ENCODE measurements at regions of chr10 and their contacts with region 1.

Region 1: DNA sequence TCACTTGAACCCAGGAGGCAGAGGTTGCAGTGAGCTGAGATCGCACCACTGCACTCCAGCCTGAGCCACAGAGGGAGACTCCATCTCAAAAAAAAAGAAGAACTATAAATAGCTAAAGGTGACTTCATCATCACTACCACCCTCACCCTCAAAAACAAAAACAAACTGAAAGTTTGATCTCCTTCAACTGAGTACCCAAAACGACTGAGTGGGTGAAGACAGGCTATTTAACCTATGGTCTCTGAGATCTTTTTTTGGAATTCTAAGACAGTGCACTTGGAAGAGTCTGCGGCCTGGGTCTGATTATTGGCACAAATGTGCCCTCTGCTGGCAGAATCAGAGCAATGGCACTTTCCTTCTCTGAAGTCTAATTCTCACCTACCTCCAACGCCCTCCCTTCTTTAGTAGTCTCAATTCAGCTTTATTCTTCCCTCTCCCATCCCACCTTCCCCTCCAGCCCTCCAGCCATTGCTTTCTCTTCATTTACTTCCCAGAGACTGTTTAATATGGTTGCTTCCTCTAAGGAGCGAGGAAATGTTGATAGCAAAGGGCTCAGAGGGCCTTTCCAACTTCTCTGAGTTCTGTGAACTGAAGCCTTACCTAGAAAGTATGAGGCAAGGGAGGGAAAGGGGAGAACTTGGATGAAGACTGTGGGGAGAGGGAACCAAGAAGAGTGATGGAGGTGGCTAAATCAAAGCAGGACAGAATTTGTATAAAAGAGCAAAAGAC is 2.9 kb upstream of the MYOZ1 start:
- DNase-seq: peak; percentile 23 to 81 (median 36)
- ATAC-seq: peak; percentile 81
- H3K4me3 ChIP-seq: no peak overlapping the region
- H3K4me3 Mint-ChIP-seq: peak overlapping the region; percentile 16
- H3K27ac ChIP-seq: no peak overlapping the region
- H3K27ac Mint-ChIP-seq: no peak overlapping the region
- H3K4me1 ChIP-seq: peaks cover 23% of the 10 kb centered on the region
- H3K4me1 Mint-ChIP-seq: peaks cover 5% of the 10 kb centered on the region
- H3K27me3 ChIP-seq: peaks cover 0 to 6% of the 10 kb centered on the region in 2 experiments
- H3K27me3 Mint-ChIP-seq: peaks cover 17% of the 10 kb centered on the region
- CTCF ChIP-seq: peak; percentile 96

Region 2: GRCh38 chr10:73263948-73264347 is 380.2 kb before region 1 on chr10:
- CTCF ChIA-PET with region 1: no interaction called
- POLR2A ChIA-PET with region 1: no interaction called
- intact Hi-C with region 1: loop called in 1 of 2 experiments (anchors 5 kb)
- DNase-seq: peak in 2 of 14 experiments; percentile 17 to 22
- ATAC-seq: no peak
- H3K4me3 ChIP-seq: no peak overlapping the region
- H3K4me3 Mint-ChIP-seq: no peak overlapping the region
- H3K27ac ChIP-seq: no peak overlapping the region
- H3K27ac Mint-ChIP-seq: no peak overlapping the region
- H3K4me1 ChIP-seq: no peaks in the 10 kb centered on the region
- H3K4me1 Mint-ChIP-seq: no peaks in the 10 kb centered on the region
- H3K27me3 ChIP-seq: no peaks in the 10 kb centered on the region
- H3K27me3 Mint-ChIP-seq: no peaks in the 10 kb centered on the region
- CTCF ChIP-seq: peak; percentile 59

Region 3: DNA sequence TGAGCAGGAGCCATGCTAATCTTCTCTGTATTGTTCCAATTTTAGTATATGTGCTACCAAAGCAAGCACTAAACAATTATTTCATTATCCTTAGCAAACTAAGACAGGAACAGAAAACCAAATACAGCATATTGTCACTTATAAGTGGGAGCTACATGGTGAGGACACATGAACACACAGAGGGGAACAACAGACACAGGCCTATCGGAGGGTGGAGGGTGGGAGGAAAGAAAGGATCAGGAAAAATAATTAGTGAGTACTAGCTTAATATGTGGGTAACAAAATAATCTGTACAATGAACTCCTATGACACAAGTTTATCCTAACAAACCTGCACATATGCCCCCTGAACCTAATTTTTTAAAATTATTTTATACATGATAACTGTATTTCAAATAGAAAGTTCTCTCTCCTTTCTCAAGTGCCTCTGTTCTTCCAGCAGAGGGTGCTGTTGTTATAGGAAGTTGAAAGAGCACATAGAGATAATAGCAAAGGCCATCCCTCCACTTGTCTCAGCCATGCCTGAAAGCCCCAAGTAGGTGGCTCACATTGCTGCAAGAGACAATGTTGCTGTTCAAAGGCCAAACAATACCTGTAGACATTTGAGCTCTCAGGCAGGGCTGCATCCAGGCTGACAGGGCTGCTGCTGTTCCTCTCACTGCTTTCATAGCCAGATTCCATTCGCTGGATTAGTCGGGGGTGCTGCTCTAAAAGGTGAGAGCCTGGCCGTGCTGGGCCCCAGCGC is 114.9 kb before region 1 on chr10:
- CTCF ChIA-PET with region 1: interaction called, 26 read pairs
- POLR2A ChIA-PET with region 1: interaction called, 5 read pairs
- intact Hi-C with region 1: loop called (anchors 1 kb)
- DNase-seq: peak in 13 of 14 experiments; percentile 2 to 82 (median 32)
- ATAC-seq: peak; percentile 95
- H3K4me3 ChIP-seq: no peak overlapping the region
- H3K4me3 Mint-ChIP-seq: no peak overlapping the region
- H3K27ac ChIP-seq: no peak overlapping the region
- H3K27ac Mint-ChIP-seq: no peak overlapping the region
- H3K4me1 ChIP-seq: no peaks in the 10 kb centered on the region
- H3K4me1 Mint-ChIP-seq: no peaks in the 10 kb centered on the region
- H3K27me3 ChIP-seq: no peaks in the 10 kb centered on the region
- H3K27me3 Mint-ChIP-seq: no peaks in the 10 kb centered on the region
- CTCF ChIP-seq: peak; percentile 88